Aorta (tissue), 5 donors: ENCODE measurements at regions of chr6 and their contacts with region 1.

Region 1: GRCh38 chr6:11064836-11065235 is 20.7 kb upstream of the ELOVL2 start:
- DNase-seq: no peak
- ATAC-seq: no peak
- H3K4me3 ChIP-seq: no peak overlapping the region
- H3K27ac ChIP-seq: no peak overlapping the region
- H3K4me1 ChIP-seq: no peaks in the 10 kb centered on the region
- H3K27me3 ChIP-seq: no peaks in the 10 kb centered on the region

Region 2: DNA sequence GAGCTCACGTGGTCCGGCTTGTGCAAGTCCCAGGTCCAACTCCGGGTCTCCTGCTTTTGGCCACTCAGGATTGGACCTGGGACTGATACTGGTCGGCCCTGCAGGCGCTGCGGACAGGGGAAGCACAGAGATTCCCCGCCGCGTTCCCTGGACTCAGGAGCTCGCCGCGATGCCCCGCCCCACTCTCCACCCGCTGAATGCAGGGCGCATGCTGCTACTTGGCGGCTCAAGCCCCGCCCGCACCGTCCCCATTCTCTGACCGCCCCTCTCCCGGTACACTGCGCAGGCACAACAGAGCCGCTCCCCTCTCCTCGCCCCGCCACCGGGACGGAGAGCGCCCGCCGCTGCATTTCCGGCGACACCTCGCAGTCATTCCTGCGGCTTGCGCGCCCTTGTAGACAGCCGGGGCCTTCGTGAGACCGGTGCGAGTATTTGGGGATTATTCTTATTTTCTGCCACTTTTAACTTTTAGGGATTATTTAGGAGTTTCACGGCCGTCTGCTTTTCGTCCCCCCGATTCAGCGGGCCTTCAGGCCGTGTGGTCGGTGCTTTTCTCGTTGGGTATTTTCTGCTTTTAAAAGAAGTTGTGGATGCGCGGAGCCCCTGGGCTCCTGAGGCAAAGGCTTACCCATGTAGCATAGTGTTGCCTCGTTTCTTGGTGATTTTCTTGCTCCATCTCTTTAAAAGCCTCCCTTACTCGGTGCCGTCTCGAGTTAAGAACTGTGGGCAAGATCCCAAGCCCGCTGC is 341.8 kb before region 1 on chr6 and contains the start of gene TMEM14C:
- intact Hi-C with region 1: no loop called
- DNase-seq: peak; percentile 99 to 100
- ATAC-seq: peak; percentile 99
- H3K4me3 ChIP-seq: peak within 1 kb of the TSS; percentile 68 to 78
- H3K27ac ChIP-seq: peak within 1 kb of the TSS; percentile 9 to 85
- H3K4me1 ChIP-seq: peaks cover 3 to 5% of the 10 kb centered on the region in 2 donors
- H3K27me3 ChIP-seq: no peaks in the 10 kb centered on the region
- total RNA-seq, gene TMEM14C: 72.8 to 85.3 TPM

Region 3: GRCh38 chr6:10800829-10801535 is 263.9 kb before region 1 on chr6:
- intact Hi-C with region 1: loop called in 1 of 2 experiments (anchors 10 kb)
- DNase-seq: peak in 1 of 2 donors; percentile 81
- ATAC-seq: peak; percentile 86
- H3K4me3 ChIP-seq: no peak overlapping the region
- H3K27ac ChIP-seq: no peak overlapping the region
- H3K4me1 ChIP-seq: no peaks in the 10 kb centered on the region
- H3K27me3 ChIP-seq: no peaks in the 10 kb centered on the region

Region 4: DNA sequence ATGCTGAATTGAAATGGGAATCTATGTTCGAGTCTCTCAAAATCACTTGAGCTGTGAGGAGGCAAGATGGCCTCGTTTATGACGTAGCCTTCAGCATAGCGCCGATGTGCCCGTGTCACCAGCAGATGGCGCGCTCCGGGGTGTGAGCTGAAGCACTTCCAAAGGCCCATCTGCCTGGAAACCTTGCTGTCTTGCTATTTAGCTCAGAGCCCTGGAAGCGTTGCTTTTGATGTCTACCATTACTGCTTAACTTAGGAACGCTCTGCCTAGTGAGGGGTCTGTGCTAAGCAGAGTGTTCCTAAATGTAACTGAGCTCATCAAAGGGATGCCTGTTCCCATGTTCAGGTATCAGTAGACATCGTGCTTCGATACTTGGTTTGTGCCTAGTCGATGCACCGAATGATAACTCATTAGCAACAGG is 110.2 kb before region 1 on chr6:
- intact Hi-C with region 1: loop called (anchors 5 to 10 kb)
- DNase-seq: peak; percentile 74 to 87
- ATAC-seq: peak; percentile 54
- H3K4me3 ChIP-seq: no peak overlapping the region
- H3K27ac ChIP-seq: no peak overlapping the region
- H3K4me1 ChIP-seq: no peaks in the 10 kb centered on the region
- H3K27me3 ChIP-seq: no peaks in the 10 kb centered on the region

Region 5: DNA sequence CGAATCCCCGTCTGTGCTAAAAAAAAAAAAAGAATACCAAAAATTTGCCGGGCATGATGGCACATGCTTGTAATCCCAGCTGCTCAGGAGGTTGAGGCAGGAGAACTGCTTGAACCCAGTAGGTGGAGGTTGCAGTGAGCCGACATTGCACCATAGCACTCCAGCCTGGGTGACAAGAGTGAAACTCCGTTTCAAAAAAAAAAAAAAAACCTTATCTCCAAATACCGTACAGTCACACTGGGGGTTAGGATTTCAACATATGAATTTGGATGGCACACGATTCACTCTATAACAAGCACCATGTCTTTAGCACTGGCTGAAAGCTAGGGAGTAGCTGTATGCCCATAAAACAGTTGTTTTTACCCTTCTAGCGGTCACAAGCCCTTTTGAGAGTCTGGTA is 32.6 kb after region 1 on chr6:
- intact Hi-C with region 1: no loop called
- DNase-seq: no peak
- ATAC-seq: no peak
- H3K4me3 ChIP-seq: no peak overlapping the region
- H3K27ac ChIP-seq: no peak overlapping the region
- H3K4me1 ChIP-seq: no peaks in the 10 kb centered on the region
- H3K27me3 ChIP-seq: no peaks in the 10 kb centered on the region